Heart right ventricle (tissue), 16 donors: ENCODE measurements at regions of chr10 and their contacts with region 1.

Region 1: DNA sequence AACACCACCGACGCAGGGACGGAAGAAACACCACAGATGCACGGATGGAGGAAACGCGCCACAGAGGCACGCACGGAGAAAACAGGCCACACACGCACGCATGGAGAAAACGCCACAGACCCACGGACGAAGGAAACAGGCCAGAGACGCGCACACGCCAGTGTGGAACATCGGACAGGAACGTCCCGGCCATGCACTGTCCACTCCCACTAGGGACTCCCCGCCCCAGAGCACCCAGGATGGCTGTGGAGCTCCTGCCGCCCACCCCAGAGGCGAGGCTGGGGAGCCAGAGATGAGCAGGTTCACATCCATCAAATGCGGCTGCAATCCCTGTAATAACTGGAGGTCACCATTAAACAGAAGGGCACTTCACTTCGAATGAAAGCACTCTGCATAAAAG is 17.3 kb downstream of the DIP2C start:
- DNase-seq: no peak
- ATAC-seq: peak in 1 of 8 donors; percentile 56
- H3K4me3 ChIP-seq: no peak overlapping the region
- H3K27ac ChIP-seq: no peak overlapping the region
- H3K4me1 ChIP-seq: peaks cover 0 to 19% (median 8%) of the 10 kb centered on the region in 9 donors
- H3K27me3 ChIP-seq: no peaks in the 10 kb centered on the region
- CTCF ChIP-seq: no peak

Region 2: GRCh38 chr10:484441-484924 is 187.7 kb before region 1 on chr10:
- intact Hi-C with region 1: no loop called
- DNase-seq: no peak
- ATAC-seq: peak in 6 of 8 donors; percentile 22 to 60 (median 50)
- H3K4me3 ChIP-seq: peak overlapping the region in 9 of 10 donors; percentile 17 to 63 (median 51)
- H3K27ac ChIP-seq: peak overlapping the region in 9 of 10 donors; percentile 61 to 80 (median 69)
- H3K4me1 ChIP-seq: peaks cover 3 to 42% (median 18%) of the 10 kb centered on the region in 9 donors
- H3K27me3 ChIP-seq: no peaks in the 10 kb centered on the region
- CTCF ChIP-seq: no peak

Region 3: GRCh38 chr10:526651-527311 is 145.4 kb before region 1 on chr10:
- intact Hi-C with region 1: no loop called
- DNase-seq: no peak
- ATAC-seq: peak in 1 of 8 donors; percentile 6
- H3K4me3 ChIP-seq: no peak overlapping the region
- H3K27ac ChIP-seq: no peak overlapping the region
- H3K4me1 ChIP-seq: peaks cover 0 to 20% (median 6%) of the 10 kb centered on the region in 9 donors
- H3K27me3 ChIP-seq: no peaks in the 10 kb centered on the region
- CTCF ChIP-seq: no peak

Region 4: GRCh38 chr10:615583-616152 is 56.5 kb before region 1 on chr10:
- intact Hi-C with region 1: loop called in 1 of 10 experiments (anchors 5 kb)
- DNase-seq: no peak
- ATAC-seq: no peak
- H3K4me3 ChIP-seq: no peak overlapping the region
- H3K27ac ChIP-seq: no peak overlapping the region
- H3K4me1 ChIP-seq: peaks cover 3 to 72% (median 41%) of the 10 kb centered on the region in 9 donors
- H3K27me3 ChIP-seq: peaks cover 0 to 5% (median 0%) of the 10 kb centered on the region in 7 donors
- CTCF ChIP-seq: no peak

Region 5: DNA sequence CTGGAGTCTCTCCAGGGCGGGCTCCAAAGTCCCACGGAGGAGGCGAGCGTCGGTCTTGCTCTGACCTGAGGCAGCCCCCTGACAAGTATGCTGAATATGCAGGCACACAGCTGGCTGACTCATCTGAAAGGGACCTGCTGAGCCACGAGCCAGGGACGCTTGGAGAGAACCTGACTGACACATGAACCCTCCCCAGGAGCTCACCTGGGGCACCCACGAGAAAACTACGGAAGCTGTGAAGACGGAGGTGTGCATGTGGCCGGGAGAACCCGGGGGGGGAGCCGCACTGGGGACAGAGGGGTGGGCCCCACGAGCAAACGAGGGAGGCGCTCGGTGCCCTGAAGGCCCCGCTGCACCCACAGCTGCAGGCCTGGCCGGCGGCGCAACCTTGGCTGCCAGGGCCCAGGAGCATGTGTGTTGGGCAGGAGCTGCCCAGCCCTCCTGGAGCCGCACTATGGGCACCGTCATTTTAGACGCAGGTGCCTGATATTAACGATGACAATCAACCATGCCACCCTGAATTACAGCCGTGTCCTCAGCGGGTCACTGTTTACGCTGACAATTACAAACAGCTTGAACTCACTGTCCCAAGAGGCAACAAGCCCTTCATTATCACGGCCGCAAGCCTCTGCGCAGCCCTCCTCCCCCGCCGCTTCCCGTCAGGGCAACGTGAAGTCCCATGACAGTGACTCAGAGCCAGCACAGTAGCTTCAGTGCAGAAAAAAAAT is 47.4 kb before region 1 on chr10:
- intact Hi-C with region 1: loop called in 2 of 10 experiments (anchors 5 kb)
- DNase-seq: peak; percentile 72 to 79
- ATAC-seq: peak; percentile 81 to 92 (median 90)
- H3K4me3 ChIP-seq: peak overlapping the region in 8 of 10 donors; percentile 1 to 40 (median 24)
- H3K27ac ChIP-seq: peak overlapping the region; percentile 70 to 94 (median 82)
- H3K4me1 ChIP-seq: peaks cover 10 to 58% (median 32%) of the 10 kb centered on the region in 9 donors
- H3K27me3 ChIP-seq: peaks cover 0 to 3% (median 0%) of the 10 kb centered on the region in 7 donors
- CTCF ChIP-seq: peak in 1 of 9 donors; percentile 10

Region 6: GRCh38 chr10:707861-708260 is 35.7 kb after region 1 on chr10:
- intact Hi-C with region 1: no loop called
- DNase-seq: no peak
- ATAC-seq: no peak
- H3K4me3 ChIP-seq: no peak overlapping the region
- H3K27ac ChIP-seq: no peak overlapping the region
- H3K4me1 ChIP-seq: no peaks in the 10 kb centered on the region
- H3K27me3 ChIP-seq: peaks cover 0 to 20% (median 4%) of the 10 kb centered on the region in 7 donors
- CTCF ChIP-seq: no peak

Region 7: DNA sequence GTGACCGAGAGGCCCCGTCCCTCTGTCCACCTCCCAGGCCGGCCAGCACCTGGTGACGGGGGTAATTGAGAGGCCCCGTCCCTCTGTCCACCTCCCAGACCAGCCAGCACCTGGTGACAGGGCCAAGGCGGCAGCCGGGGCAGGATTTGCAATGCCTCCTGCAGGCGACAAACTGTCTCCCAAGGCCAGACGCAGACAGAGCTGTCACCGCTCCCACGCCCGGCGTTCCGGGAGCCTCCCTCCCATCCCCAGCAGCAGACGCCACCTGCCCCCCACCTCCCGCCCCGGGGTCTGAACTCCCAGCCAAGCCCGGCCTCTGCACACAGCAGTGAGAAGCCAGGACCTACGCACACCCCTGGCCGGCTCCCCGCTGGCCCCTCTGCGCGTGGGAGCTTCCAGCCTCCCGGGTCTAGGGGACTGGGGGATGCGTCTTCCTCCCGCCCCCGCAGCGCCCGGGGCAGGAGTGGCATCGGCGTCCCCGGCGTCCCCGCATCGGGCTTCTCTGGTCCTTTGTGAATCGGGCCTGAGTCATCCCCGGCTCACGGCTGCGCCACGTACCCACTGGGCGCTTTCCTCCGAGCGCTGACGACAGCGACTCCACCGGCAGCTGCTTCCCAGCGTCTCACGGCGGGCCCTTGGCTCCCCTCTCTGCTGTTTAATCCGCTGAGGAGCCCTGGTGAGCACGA is 112.3 kb after region 1 on chr10:
- intact Hi-C with region 1: no loop called
- DNase-seq: peak; percentile 33 to 46
- ATAC-seq: peak; percentile 46 to 89 (median 66)
- H3K4me3 ChIP-seq: peak overlapping the region in 9 of 10 donors; percentile 35 to 56 (median 48)
- H3K27ac ChIP-seq: peak overlapping the region in 1 of 10 donors; percentile 13
- H3K4me1 ChIP-seq: peaks cover 0 to 28% (median 17%) of the 10 kb centered on the region in 9 donors
- H3K27me3 ChIP-seq: peaks cover 0 to 33% (median 26%) of the 10 kb centered on the region in 7 donors
- CTCF ChIP-seq: peak in 3 of 9 donors; percentile 12 to 26 (median 23)